Psoas muscle (tissue), 8 donors: ENCODE measurements at regions of chr19 and their contacts with region 1.

Region 1: GRCh38 chr19:23699082-23699761 is 12.2 kb upstream of the ZNF675 start:
- DNase-seq: no peak
- ATAC-seq: no peak
- H3K4me3 ChIP-seq: no peak overlapping the region
- H3K27ac ChIP-seq: no peak overlapping the region
- H3K4me1 ChIP-seq: no peaks in the 10 kb centered on the region
- H3K27me3 ChIP-seq: no peaks in the 10 kb centered on the region
- CTCF ChIP-seq: no peak

Region 2: DNA sequence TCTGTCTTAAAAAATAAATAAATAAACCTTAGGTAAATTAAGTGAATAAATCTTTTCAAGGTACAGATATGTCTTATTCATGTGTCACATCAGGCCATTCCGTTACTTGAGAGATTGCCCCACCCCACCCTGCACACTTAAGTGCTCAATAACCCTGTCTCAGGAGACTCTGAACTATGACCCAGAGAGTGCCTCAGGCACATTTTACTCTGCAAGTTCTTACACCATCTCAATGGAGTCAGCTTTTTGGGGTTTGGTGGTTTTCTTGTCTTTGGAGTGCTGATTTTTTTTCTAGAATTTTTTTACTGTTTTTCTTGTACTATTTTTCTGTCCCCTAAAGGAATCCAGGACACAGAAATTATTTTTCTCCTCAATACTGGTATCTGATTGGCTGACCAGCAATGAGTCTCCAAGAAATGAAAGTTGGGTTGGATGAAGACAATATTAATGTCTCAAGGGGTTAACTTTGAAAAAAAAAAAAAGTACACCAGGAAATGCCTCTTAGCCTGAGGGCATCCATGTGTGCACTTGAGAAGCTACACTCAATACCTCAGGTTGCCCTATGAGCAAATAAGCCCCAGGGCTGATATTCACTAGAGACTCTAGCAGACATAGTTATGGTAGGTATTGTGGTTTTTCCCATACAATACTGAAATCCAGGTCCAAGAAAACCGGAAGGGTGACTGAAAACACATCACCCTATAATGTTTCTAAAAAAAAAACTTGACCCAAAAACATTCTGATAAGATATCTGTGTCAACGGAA is 189.4 kb before region 1 on chr19:
- intact Hi-C with region 1: no loop called
- DNase-seq: no peak
- ATAC-seq: no peak
- H3K4me3 ChIP-seq: no peak overlapping the region
- H3K27ac ChIP-seq: no peak overlapping the region
- H3K4me1 ChIP-seq: no peaks in the 10 kb centered on the region
- H3K27me3 ChIP-seq: no peaks in the 10 kb centered on the region
- CTCF ChIP-seq: no peak

Region 3: DNA sequence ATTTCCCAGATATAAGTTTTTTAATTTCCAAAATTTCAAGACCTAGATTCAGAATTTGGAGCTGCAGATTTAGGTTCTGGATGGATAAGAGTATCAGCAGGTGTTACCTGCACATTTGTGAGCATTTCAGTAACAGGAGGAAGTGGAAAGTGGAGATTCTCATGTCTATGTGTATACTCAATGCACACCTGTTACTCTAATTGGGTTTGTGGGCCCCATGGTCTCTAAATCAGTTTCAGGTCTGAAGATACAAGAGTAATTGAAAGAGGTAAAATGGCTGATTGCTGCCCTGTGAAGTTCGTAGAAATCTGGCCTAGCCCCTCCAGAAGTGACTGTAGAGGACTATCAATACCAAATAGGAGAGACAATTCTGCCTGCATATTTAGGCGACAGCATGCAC is 26.1 kb before region 1 on chr19:
- intact Hi-C with region 1: loop called in 1 of 2 experiments (anchors 2 kb)
- DNase-seq: no peak
- ATAC-seq: no peak
- H3K4me3 ChIP-seq: no peak overlapping the region
- H3K27ac ChIP-seq: no peak overlapping the region
- H3K4me1 ChIP-seq: no peaks in the 10 kb centered on the region
- H3K27me3 ChIP-seq: no peaks in the 10 kb centered on the region
- CTCF ChIP-seq: no peak

Region 4: GRCh38 chr19:23802290-23802689 is 103.1 kb after region 1 on chr19:
- intact Hi-C with region 1: no loop called
- DNase-seq: no peak
- ATAC-seq: no peak
- H3K4me3 ChIP-seq: no peak overlapping the region
- H3K27ac ChIP-seq: no peak overlapping the region
- H3K4me1 ChIP-seq: no peaks in the 10 kb centered on the region
- H3K27me3 ChIP-seq: no peaks in the 10 kb centered on the region
- CTCF ChIP-seq: no peak